ENCODE measurements at regions of chr20 and their contacts with region 1.

Region 1: DNA sequence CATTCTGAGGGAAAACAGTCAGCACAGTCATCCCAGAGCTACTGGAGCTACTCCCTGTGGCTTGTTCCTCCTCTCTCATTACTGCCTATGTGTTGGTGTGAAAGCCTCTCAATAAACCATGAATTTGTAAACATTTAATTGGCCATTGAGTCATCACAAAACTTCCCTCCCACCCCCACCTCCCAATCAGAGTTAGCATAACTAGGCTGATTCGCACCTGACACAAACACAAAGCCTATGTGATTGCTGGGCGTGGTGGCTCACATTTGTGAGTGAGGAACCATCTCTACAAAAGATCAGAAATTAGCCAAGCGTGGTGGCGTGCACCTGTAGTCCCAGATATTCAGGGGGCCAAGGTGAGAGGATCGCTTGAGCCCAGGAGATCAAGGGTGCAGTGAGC is 17.1 kb upstream of the SNTA1 start:
- DNase-seq: peak; percentile 10
- ATAC-seq: no peak
- H3K4me3 Mint-ChIP-seq: no peak overlapping the region
- H3K27ac Mint-ChIP-seq: no peak overlapping the region
- H3K4me1 Mint-ChIP-seq: no peaks in the 10 kb centered on the region
- H3K27me3 Mint-ChIP-seq: no peaks in the 10 kb centered on the region
- CTCF ChIP-seq: no peak

Region 2: DNA sequence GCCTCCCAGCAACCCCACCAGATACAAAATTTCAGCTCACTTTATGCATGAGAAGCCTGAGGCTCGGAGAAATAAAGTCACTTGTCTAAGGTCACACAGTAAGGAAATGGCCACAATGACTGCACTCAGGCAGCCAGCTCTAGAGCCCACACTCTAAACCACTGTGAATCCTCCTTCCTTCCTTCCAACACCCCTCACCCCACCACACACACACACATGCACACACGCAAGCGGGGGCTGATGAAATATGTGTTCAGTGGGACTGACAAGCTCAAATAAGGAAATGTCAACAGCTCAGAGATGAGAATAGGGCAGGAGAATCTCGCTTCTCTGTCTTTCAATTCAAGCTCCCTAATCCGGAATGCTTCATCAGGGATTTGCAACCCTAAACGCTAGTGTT is 230.9 kb before region 1 on chr20:
- CTCF ChIA-PET with region 1: no interaction called
- POLR2A ChIA-PET with region 1: no interaction called
- intact Hi-C with region 1: no loop called
- DNase-seq: peak; percentile 68
- ATAC-seq: peak; percentile 83
- H3K4me3 Mint-ChIP-seq: no peak overlapping the region
- H3K27ac Mint-ChIP-seq: peak overlapping the region; percentile 57
- H3K4me1 Mint-ChIP-seq: peaks cover 19% of the 10 kb centered on the region
- H3K27me3 Mint-ChIP-seq: peaks cover 11% of the 10 kb centered on the region
- CTCF ChIP-seq: no peak

Region 3: GRCh38 chr20:33423141-33423834 is 37.4 kb before region 1 on chr20:
- CTCF ChIA-PET with region 1: no interaction called
- POLR2A ChIA-PET with region 1: no interaction called
- intact Hi-C with region 1: no loop called
- DNase-seq: no peak
- ATAC-seq: no peak
- H3K4me3 Mint-ChIP-seq: no peak overlapping the region
- H3K27ac Mint-ChIP-seq: no peak overlapping the region
- H3K4me1 Mint-ChIP-seq: no peaks in the 10 kb centered on the region
- H3K27me3 Mint-ChIP-seq: no peaks in the 10 kb centered on the region
- CTCF ChIP-seq: no peak

Region 4: GRCh38 chr20:33437141-33437911 is 23.4 kb before region 1 on chr20:
- CTCF ChIA-PET with region 1: no interaction called
- POLR2A ChIA-PET with region 1: no interaction called
- intact Hi-C with region 1: no loop called
- DNase-seq: no peak
- ATAC-seq: no peak
- H3K4me3 Mint-ChIP-seq: no peak overlapping the region
- H3K27ac Mint-ChIP-seq: no peak overlapping the region
- H3K4me1 Mint-ChIP-seq: no peaks in the 10 kb centered on the region
- H3K27me3 Mint-ChIP-seq: no peaks in the 10 kb centered on the region
- CTCF ChIP-seq: no peak

Region 5: GRCh38 chr20:33489495-33490022 is 28.8 kb after region 1 on chr20:
- CTCF ChIA-PET with region 1: interaction called, 13 read pairs
- POLR2A ChIA-PET with region 1: no interaction called
- intact Hi-C with region 1: no loop called
- DNase-seq: peak; percentile 99
- ATAC-seq: peak; percentile 99
- H3K4me3 Mint-ChIP-seq: peak overlapping the region; percentile 82
- H3K27ac Mint-ChIP-seq: peak overlapping the region; percentile 86
- H3K4me1 Mint-ChIP-seq: peaks cover 11% of the 10 kb centered on the region
- H3K27me3 Mint-ChIP-seq: no peaks in the 10 kb centered on the region
- CTCF ChIP-seq: no peak

Region 6: DNA sequence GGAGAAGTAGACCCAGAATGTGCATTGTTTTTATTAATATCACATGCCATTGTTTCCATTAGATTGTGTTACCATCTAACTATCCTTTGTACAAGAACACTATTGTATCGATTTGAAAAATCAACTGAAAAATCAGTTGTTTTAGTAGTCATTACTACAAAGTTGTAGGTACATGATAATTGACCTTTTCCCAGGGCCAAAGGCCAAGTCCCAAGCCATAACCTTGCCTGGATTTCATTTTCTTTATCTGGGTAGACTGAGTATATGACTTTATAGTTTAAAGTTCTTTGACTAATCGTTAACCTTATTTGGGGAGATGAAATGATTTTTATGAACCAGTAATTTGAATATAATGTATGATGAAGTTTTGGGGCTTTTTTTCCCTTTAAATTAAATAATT is 122.4 kb after region 1 on chr20:
- CTCF ChIA-PET with region 1: no interaction called
- POLR2A ChIA-PET with region 1: no interaction called
- intact Hi-C with region 1: no loop called
- DNase-seq: no peak
- ATAC-seq: no peak
- H3K4me3 Mint-ChIP-seq: no peak overlapping the region
- H3K27ac Mint-ChIP-seq: no peak overlapping the region
- H3K4me1 Mint-ChIP-seq: peaks cover 7% of the 10 kb centered on the region
- H3K27me3 Mint-ChIP-seq: no peaks in the 10 kb centered on the region
- CTCF ChIP-seq: no peak

Region 7: DNA sequence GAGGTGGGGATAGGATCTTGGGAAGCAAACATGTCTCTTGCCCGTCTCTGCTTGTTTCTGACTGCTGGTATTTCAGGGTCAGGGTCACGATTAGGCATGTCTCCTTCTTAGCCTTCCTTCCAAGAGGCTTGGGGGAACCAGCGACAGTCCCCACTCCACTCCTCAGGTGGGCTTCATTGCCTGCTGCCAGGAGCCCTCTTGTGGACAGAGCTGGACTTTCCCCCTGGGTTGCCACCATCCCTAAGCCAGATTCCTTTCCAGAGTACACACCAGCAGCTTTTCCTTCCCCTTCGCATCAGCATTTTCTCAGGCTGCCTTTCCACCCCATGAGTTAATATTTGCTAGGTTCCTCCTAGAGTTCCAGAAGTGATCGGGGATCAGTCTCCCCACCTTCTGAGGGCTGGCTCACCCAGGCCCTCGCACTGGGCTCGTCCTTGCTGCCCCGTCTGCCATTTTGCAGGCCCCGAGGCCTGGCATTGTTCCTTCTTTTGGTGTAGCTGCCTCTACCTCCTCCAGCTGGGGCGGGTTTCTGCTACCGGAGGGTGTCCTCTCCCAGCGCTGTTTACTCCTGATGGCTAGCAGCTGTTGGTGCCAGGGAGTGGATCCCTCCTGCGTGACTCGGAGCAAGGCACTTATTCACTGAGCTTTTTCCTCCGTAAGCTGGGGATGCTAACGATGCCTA is 192.6 kb after region 1 on chr20:
- CTCF ChIA-PET with region 1: interaction called, 9 read pairs
- POLR2A ChIA-PET with region 1: no interaction called
- intact Hi-C with region 1: loop called (anchors 5 kb)
- DNase-seq: peak; percentile 72
- ATAC-seq: peak; percentile 77
- H3K4me3 Mint-ChIP-seq: no peak overlapping the region
- H3K27ac Mint-ChIP-seq: no peak overlapping the region
- H3K4me1 Mint-ChIP-seq: peaks cover 28% of the 10 kb centered on the region
- H3K27me3 Mint-ChIP-seq: no peaks in the 10 kb centered on the region
- CTCF ChIP-seq: peak; percentile 71

Measured in activated CD8-positive, alpha-beta T cell treated with anti-CD3 and anti-CD28 coated beads for 36 hours (primary cell).